Gastrocnemius medialis (tissue), 4 donors: ENCODE measurements at regions of chr6 and their contacts with region 1.

Region 1: DNA sequence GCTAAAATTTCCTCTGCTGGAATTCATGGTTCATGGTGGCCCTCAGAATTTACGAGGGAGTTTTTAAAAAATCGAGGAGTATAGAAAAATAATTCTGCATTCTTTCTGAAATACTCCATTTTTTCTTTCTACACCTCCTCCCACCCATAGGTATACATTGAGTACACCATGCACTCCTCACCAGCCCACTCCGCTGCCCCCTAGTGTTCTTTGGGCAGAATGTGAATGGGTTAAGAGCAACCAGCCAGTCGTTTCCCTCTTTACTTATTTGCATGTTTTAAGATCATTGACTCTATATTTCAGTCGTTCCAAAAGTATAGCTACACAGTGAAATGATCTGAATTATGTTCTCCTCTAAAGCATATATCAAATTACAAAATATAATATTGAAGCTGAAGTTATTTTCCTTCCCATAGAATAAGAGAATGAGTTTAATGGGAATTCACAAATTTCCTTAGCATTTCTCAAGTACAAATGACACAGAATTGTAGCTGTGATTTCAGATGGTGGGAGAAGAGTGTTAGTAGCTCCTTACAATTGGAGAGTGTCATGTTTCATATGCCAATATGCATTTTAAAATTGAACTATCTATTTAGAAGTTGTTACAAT is 977.7 kb upstream of the SLC35B3 start:
- DNase-seq: no peak
- ATAC-seq: no peak
- H3K4me3 ChIP-seq: no peak overlapping the region
- H3K27ac ChIP-seq: no peak overlapping the region
- H3K4me1 ChIP-seq: no peaks in the 10 kb centered on the region
- H3K27me3 ChIP-seq: no peaks in the 10 kb centered on the region
- CTCF ChIP-seq: peak in 1 of 5 experiments; percentile 18
- POLR2A ChIP-seq: no peak

Region 2: DNA sequence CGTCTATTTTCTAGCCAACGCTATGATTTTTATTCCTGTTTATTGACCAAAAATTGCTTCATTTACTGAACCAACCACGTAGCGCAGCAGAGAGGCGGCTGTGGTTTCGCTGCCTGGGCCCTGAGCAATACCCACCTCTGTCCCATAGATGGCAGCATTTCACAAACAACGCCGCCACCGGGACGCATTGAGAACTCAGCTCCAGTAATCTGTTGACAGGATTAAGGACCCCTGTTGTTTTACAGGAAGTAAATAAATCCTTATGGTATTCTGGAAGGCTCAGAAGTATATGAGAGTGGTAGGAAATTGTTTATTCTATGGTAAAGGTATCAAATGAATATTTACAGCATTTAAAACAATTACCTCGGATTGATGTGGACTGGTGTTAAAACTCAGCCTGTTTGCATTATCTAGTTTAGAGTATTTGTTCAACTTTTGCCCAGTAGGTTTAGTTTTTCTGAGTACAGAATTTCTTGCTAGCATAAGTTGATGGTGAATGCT is 429.8 kb before region 1 on chr6:
- in situ Hi-C with region 1: no loop called
- intact Hi-C with region 1: loop called (anchors 5 kb)
- DNase-seq: peak; percentile 11 to 27
- ATAC-seq: peak; percentile 55 to 62
- H3K4me3 ChIP-seq: no peak overlapping the region
- H3K27ac ChIP-seq: no peak overlapping the region
- H3K4me1 ChIP-seq: no peaks in the 10 kb centered on the region
- H3K27me3 ChIP-seq: no peaks in the 10 kb centered on the region
- CTCF ChIP-seq: peak; percentile 42 to 89 (median 59)
- POLR2A ChIP-seq: no peak

Region 3: DNA sequence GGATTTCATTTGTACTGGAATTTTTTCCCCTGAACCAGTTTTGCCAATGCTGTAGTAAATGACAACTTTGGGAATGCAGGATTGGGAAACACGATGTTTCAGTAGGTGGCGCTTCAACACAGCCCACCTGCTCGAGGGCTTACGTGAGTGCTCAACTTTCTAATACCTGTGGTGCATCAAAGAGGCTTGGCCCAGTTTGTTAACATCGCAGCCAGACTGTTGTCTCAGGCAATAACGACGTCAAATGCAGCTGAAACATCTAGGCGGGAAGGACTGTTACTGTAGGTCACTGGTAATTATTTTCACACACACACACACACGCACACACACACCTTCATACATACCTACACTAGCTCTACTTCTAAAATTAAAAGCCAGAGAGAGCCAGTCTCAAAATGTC is 162.2 kb before region 1 on chr6:
- in situ Hi-C with region 1: no loop called
- intact Hi-C with region 1: loop called (anchors 5 kb)
- DNase-seq: no peak
- ATAC-seq: no peak
- H3K4me3 ChIP-seq: no peak overlapping the region
- H3K27ac ChIP-seq: no peak overlapping the region
- H3K4me1 ChIP-seq: no peaks in the 10 kb centered on the region
- H3K27me3 ChIP-seq: no peaks in the 10 kb centered on the region
- CTCF ChIP-seq: peak in 1 of 5 experiments; percentile 16
- POLR2A ChIP-seq: no peak